Aorta (tissue), 5 donors: ENCODE measurements at regions of chr15 and their contacts with region 1.

Region 1: GRCh38 chr15:81792729-81793242 is 253.0 kb downstream of the MEX3B start:
- DNase-seq: no peak
- ATAC-seq: no peak
- H3K4me3 ChIP-seq: no peak overlapping the region
- H3K27ac ChIP-seq: no peak overlapping the region
- H3K4me1 ChIP-seq: no peaks in the 10 kb centered on the region
- H3K27me3 ChIP-seq: peaks cover 0 to 3% of the 10 kb centered on the region in 2 donors

Region 2: GRCh38 chr15:81723701-81724100 is 69.1 kb before region 1 on chr15:
- intact Hi-C with region 1: no loop called
- DNase-seq: no peak
- ATAC-seq: no peak
- H3K4me3 ChIP-seq: no peak overlapping the region
- H3K27ac ChIP-seq: no peak overlapping the region
- H3K4me1 ChIP-seq: no peaks in the 10 kb centered on the region
- H3K27me3 ChIP-seq: no peaks in the 10 kb centered on the region

Region 3: GRCh38 chr15:81859737-81860516 is 67.1 kb after region 1 on chr15:
- intact Hi-C with region 1: loop called in 1 of 2 experiments (anchors 10 kb)
- DNase-seq: no peak
- ATAC-seq: no peak
- H3K4me3 ChIP-seq: no peak overlapping the region
- H3K27ac ChIP-seq: no peak overlapping the region
- H3K4me1 ChIP-seq: no peaks in the 10 kb centered on the region
- H3K27me3 ChIP-seq: no peaks in the 10 kb centered on the region

Region 4: GRCh38 chr15:81887912-81888311 is 95.1 kb after region 1 on chr15:
- intact Hi-C with region 1: no loop called
- DNase-seq: no peak
- ATAC-seq: peak; percentile 57
- H3K4me3 ChIP-seq: no peak overlapping the region
- H3K27ac ChIP-seq: no peak overlapping the region
- H3K4me1 ChIP-seq: peaks cover 0 to 4% of the 10 kb centered on the region in 2 donors
- H3K27me3 ChIP-seq: no peaks in the 10 kb centered on the region

Region 5: DNA sequence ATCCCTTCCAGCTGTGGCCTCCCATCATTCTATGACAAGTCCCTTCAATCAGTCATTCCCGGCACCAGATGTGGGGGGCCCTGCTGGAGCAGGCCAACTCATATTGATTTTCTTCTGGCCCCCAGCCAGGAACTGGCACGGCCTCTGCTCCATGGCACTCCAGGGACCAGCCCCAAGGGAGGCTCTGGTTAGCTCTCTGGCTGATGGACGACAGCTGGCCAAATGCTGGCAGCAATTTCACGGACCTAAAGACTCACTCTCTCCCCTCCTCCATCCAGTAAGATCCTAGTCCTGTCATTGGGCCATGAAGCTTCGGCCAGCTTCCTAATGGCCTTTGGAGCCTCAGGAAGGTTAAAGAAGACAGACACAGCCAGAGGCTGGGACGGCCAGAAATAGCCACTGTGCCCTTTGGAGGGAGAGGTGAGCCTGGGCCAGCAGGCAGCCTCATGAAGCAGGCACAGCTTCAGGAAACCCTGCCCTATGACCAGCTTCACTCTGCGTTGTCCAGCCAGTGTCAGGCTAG is 122.0 kb after region 1 on chr15:
- intact Hi-C with region 1: no loop called
- DNase-seq: no peak
- ATAC-seq: peak; percentile 62
- H3K4me3 ChIP-seq: no peak overlapping the region
- H3K27ac ChIP-seq: no peak overlapping the region
- H3K4me1 ChIP-seq: no peaks in the 10 kb centered on the region
- H3K27me3 ChIP-seq: no peaks in the 10 kb centered on the region